GM12878 (cell line): ENCODE measurements at regions of chr6 and their contacts with region 1.

Region 1: DNA sequence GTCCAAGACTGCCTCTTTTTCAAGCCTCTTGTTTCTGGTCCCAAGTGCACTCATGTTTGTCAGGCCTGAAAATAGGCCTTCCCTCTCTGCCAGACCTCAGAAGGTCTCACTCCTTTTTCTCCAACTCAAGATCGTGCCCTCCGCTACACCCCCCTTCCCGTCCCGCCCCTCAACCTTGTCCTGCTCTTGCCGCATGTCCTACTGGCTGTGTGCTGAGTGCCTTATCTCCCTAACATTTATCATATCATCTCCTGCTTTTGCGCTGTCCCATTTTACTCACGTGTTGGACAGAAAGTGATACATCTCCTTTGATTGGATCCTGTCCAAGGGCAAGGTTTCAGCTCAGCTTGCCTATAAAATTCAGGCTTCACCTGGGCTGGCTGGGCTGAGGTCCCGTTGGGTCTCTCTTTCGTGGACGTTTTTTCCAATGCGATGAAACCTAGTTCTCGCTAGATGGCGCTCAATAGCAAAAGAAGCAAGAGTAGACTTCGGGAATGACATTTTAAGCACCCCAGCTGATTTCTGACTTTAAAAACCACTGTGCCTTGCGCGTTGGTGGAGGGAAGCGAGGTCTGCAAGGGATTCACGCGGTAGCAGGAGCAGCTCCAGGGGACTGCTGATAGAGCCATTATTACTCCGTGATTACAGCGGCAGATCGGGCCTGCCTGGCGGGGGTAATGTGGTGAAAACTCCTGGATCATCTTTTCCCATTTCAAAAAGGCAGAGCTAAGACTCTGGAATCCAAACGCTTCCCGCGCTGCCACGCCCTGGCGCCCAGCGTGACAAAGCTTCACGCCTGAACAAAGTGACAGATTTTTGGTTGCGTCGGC is 137.6 kb downstream of the IMPG1 start:
- DNase-seq: peak; percentile 16
- ATAC-seq: peak; percentile 86
- H3K4me3 ChIP-seq: peak overlapping the region; percentile 14; the same call in 1 of the 2 replicates
- H3K27ac ChIP-seq: no peak overlapping the region
- H3K4me1 ChIP-seq: no peaks in the 10 kb centered on the region; the same call in 1 of the 2 replicates
- H3K27me3 ChIP-seq: peaks cover 0 to 2% of the 10 kb centered on the region in 2 experiments; a peak in 1 of 4 replicates
- CTCF ChIP-seq: peak; percentile 74 to 84 (median 76)
- EP300 ChIP-seq: no peak
- POLR2A ChIP-seq: no peak
- RAD21 ChIP-seq: peak; percentile 84

Region 2: GRCh38 chr6:75922226-75922625 is 12.6 kb before region 1 on chr6:
- CTCF ChIA-PET with region 1: interaction called, 14 read pairs
- POLR2A ChIA-PET with region 1: no interaction called
- RAD21 ChIA-PET with region 1: no interaction called
- SMC1A ChIA-PET with region 1: no interaction called
- in situ Hi-C with region 1: no loop called
- intact Hi-C with region 1: no loop called
- DNase-seq: no peak
- ATAC-seq: no peak
- H3K4me3 ChIP-seq: no peak overlapping the region
- H3K27ac ChIP-seq: no peak overlapping the region
- H3K4me1 ChIP-seq: no peaks in the 10 kb centered on the region
- H3K27me3 ChIP-seq: no peaks in the 10 kb centered on the region
- CTCF ChIP-seq: no peak
- EP300 ChIP-seq: no peak
- POLR2A ChIP-seq: no peak
- RAD21 ChIP-seq: no peak

Region 3: GRCh38 chr6:76166874-76167273 is 232.0 kb after region 1 on chr6:
- CTCF ChIA-PET with region 1: no interaction called
- POLR2A ChIA-PET with region 1: no interaction called
- RAD21 ChIA-PET with region 1: no interaction called
- SMC1A ChIA-PET with region 1: no interaction called
- in situ Hi-C with region 1: no loop called
- intact Hi-C with region 1: loop called (anchors 5 kb)
- DNase-seq: no peak
- ATAC-seq: no peak
- H3K4me3 ChIP-seq: no peak overlapping the region
- H3K27ac ChIP-seq: no peak overlapping the region
- H3K4me1 ChIP-seq: no peaks in the 10 kb centered on the region
- H3K27me3 ChIP-seq: no peaks in the 10 kb centered on the region
- CTCF ChIP-seq: no peak
- EP300 ChIP-seq: no peak
- POLR2A ChIP-seq: no peak
- RAD21 ChIP-seq: no peak

Region 4: DNA sequence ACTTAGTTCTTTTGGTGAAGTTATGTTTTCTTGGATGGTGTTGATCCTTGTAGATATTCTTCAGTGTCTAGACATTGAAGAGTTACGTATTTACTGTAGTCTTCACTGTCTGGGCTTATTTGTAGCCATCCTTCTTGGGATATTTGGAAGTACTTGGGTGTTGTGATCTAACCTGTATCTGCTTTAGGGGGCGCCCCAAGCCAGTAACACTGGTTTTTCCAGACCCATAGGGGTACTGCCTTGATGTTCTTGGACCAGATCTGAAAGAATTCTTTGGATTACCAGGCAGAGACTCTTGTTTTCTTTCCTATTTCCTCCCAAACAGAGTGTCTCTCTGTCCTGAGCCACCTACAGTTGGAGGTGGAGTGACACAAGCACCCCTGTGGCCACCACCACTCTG is 446.8 kb after region 1 on chr6:
- CTCF ChIA-PET with region 1: no interaction called
- POLR2A ChIA-PET with region 1: no interaction called
- RAD21 ChIA-PET with region 1: no interaction called
- SMC1A ChIA-PET with region 1: no interaction called
- in situ Hi-C with region 1: no loop called
- intact Hi-C with region 1: no loop called
- DNase-seq: no peak
- ATAC-seq: no peak
- H3K4me3 ChIP-seq: no peak overlapping the region
- H3K27ac ChIP-seq: no peak overlapping the region
- H3K4me1 ChIP-seq: no peaks in the 10 kb centered on the region
- H3K27me3 ChIP-seq: no peaks in the 10 kb centered on the region
- CTCF ChIP-seq: no peak
- EP300 ChIP-seq: no peak
- POLR2A ChIP-seq: no peak
- RAD21 ChIP-seq: no peak

Region 5: GRCh38 chr6:76633259-76633658 is 698.4 kb after region 1 on chr6:
- CTCF ChIA-PET with region 1: no interaction called
- POLR2A ChIA-PET with region 1: no interaction called
- RAD21 ChIA-PET with region 1: no interaction called
- SMC1A ChIA-PET with region 1: no interaction called
- in situ Hi-C with region 1: no loop called
- intact Hi-C with region 1: loop called (anchors 10 kb)
- DNase-seq: no peak
- ATAC-seq: peak; percentile 71
- H3K4me3 ChIP-seq: no peak overlapping the region
- H3K27ac ChIP-seq: no peak overlapping the region
- H3K4me1 ChIP-seq: no peaks in the 10 kb centered on the region
- H3K27me3 ChIP-seq: no peaks in the 10 kb centered on the region
- CTCF ChIP-seq: no peak
- EP300 ChIP-seq: no peak
- POLR2A ChIP-seq: no peak
- RAD21 ChIP-seq: no peak

Region 6: GRCh38 chr6:76861403-76861802 is 926.5 kb after region 1 on chr6:
- CTCF ChIA-PET with region 1: interaction called, 21 read pairs
- POLR2A ChIA-PET with region 1: no interaction called
- RAD21 ChIA-PET with region 1: interaction called, 7 read pairs
- SMC1A ChIA-PET with region 1: interaction called, 11 read pairs
- in situ Hi-C with region 1: loop called (anchors 25 kb)
- intact Hi-C with region 1: loop called (anchors 2 kb)
- DNase-seq: no peak
- ATAC-seq: peak; percentile 99
- H3K4me3 ChIP-seq: no peak overlapping the region
- H3K27ac ChIP-seq: no peak overlapping the region
- H3K4me1 ChIP-seq: no peaks in the 10 kb centered on the region
- H3K27me3 ChIP-seq: no peaks in the 10 kb centered on the region
- CTCF ChIP-seq: peak; percentile 33 to 53 (median 43); a peak in 4 of 6 replicates
- EP300 ChIP-seq: no peak
- POLR2A ChIP-seq: no peak
- RAD21 ChIP-seq: peak; percentile 38